ENCODE measurements at regions of chr9 and their contacts with region 1.

Region 1: GRCh38 chr9:128552153-128552743 is at the start of gene SPTAN1:
- H3K4me3 ChIP-seq: peak within 1 kb of the TSS; percentile 77
- H3K27ac ChIP-seq: peak within 1 kb of the TSS; percentile 83
- H3K4me1 ChIP-seq: peaks cover 9% of the 10 kb centered on the region
- CTCF ChIP-seq: peak; percentile 62

Region 2: GRCh38 chr9:128355451-128355850 is 196.8 kb before region 1 on chr9:
- CTCF ChIA-PET with region 1: no interaction called
- POLR2A ChIA-PET with region 1: no interaction called
- H3K4me3 ChIP-seq: no peak overlapping the region
- H3K27ac ChIP-seq: no peak overlapping the region
- H3K4me1 ChIP-seq: no peaks in the 10 kb centered on the region
- CTCF ChIP-seq: no peak

Region 3: DNA sequence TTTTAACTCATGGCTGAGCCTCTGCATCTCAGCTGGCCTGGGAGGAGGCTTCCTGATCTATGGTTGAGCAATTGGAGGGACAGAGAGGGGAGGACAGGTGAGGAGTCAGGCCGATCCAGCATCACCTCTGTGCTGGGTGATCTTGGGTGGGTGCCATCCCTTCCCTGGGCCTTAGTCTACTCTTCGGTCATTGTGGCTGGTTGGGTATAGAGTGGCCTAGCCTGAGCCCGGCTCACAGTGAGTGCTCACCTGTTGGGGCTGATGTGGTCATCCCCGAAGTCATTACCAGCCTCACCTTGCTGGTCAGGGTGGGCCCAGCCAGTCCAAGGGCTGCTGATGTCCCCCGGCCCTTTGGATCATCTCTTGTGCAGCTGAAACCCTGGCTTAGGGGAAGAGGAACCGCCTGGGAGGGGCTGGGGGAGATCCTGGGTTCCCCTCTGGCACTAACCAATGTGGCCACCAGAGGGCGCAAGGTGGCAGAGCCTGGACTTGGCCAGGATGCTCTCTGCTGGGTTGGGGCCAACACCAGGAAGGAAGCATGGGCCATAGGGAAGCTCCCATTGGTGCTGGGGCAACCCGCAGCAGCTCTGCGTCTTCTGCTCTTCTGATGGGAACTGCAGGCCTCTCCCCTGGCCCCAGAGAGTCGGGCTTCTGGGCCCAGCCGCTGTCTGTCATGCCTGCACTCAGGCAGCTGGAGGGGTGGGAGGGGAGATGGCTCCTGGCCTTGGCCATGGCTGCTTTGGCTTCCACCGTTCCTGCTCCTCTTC is 113.7 kb before region 1 on chr9:
- CTCF ChIA-PET with region 1: interaction called, 12 read pairs
- POLR2A ChIA-PET with region 1: interaction called, 6 read pairs
- H3K4me3 ChIP-seq: no peak overlapping the region
- H3K27ac ChIP-seq: no peak overlapping the region
- H3K4me1 ChIP-seq: no peaks in the 10 kb centered on the region
- CTCF ChIP-seq: peak; percentile 67

Region 4: GRCh38 chr9:128504485-128505413 is 47.5 kb before region 1 on chr9 and contains the start of gene GLE1:
- CTCF ChIA-PET with region 1: no interaction called
- POLR2A ChIA-PET with region 1: interaction called, 20 read pairs
- H3K4me3 ChIP-seq: peak within 1 kb of the TSS; percentile 93
- H3K27ac ChIP-seq: peak within 1 kb of the TSS; percentile 70
- H3K4me1 ChIP-seq: 0 out of 2 replicates have a peak, but pooled peaks cover 2% of the 10 kb centered on the region
- CTCF ChIP-seq: 0 out of 2 replicates have a peak, but pooled peaks have one; percentile 11

Region 5: DNA sequence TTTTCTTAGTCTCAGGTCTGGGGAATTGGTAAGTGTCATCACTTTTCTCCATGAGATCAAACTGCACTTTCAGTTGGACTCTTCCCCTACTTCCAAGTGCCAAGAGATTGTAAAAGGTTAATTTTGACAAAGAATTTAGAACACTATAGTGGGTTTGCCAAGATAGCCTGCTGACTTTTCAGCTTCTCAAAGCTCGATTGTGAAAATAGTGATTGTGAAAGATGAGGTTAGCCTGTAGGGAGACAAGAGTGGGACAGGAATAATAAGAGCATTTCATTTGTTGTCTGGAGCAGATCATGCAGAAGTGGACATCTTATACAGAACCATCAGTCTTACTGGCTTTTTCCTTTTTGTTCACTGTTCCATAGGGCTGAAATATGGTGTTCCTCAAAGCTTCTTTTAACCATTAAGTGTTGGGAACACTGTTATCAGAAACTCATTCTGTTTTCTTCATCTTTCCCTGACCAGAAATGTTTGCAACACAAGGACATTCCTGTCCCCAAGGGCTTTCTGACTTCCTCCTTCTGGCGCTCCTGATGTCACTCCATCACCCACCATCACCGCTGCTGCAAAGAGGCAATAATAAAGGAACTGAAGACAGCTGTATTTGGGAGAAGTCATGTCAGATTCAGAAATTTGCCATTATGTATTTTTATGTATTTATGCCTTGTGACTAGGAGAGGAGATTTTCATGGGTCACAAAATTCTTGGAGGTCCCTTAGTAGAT is 11.5 kb before region 1 on chr9:
- CTCF ChIA-PET with region 1: interaction called, 4 read pairs
- POLR2A ChIA-PET with region 1: interaction called, 12 read pairs
- H3K4me3 ChIP-seq: no peak overlapping the region
- H3K27ac ChIP-seq: no peak overlapping the region
- H3K4me1 ChIP-seq: no peaks in the 10 kb centered on the region
- CTCF ChIP-seq: no peak

Region 6: GRCh38 chr9:128565578-128565977 is 13.3 kb after region 1 on chr9:
- CTCF ChIA-PET with region 1: interaction called, 3 read pairs
- POLR2A ChIA-PET with region 1: interaction called, 17 read pairs
- H3K4me3 ChIP-seq: no peak overlapping the region
- H3K27ac ChIP-seq: no peak overlapping the region
- H3K4me1 ChIP-seq: no peaks in the 10 kb centered on the region
- CTCF ChIP-seq: no peak

Region 7: GRCh38 chr9:128610897-128611296 is 58.6 kb after region 1 on chr9:
- CTCF ChIA-PET with region 1: no interaction called
- POLR2A ChIA-PET with region 1: no interaction called
- H3K4me3 ChIP-seq: no peak overlapping the region
- H3K27ac ChIP-seq: no peak overlapping the region
- H3K4me1 ChIP-seq: no peaks in the 10 kb centered on the region
- CTCF ChIP-seq: no peak